CD4-positive, alpha-beta T cell (primary cell): ENCODE measurements at regions of chr1 and their contacts with region 1.

Region 1: DNA sequence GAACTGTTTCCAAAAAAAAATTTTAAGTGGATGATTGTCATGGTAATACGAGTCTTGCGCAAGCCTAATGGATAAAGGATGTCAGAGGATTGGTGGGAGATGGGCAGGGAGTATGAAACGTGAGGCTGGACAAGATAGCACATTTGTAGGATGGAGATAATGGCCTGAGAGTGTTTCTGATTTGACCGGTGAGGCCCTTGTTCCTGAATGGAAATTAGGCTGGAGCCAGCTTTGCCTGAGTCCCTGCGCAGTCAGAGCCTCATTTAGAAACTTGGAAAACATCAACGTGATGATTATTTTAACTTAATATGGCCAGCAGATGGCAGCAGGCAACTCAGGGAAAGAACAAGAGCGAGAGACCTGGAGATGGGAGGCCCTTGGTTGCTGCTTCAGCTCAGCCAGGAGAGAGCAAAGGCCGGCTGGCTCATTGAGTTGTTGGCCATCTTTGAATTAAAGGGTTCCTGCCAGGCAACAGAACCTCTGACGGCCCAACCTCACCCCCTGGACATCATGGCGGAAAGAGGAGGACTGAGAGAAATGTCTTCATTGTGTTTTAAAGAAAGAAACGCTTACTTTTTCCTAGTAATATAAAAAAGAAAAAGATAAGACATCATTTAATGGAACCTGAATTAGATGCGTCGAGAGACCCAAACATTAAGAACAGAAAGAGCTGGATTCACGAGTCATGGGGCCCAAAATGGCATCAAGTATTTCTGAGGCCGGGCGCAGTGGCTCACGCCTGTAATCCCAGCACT is 80.3 kb downstream of the SELENOF start:
- DNase-seq: peak; percentile 26 to 80 (median 42)
- ATAC-seq: peak; percentile 72
- H3K4me3 ChIP-seq: no peak overlapping the region
- H3K4me3 Mint-ChIP-seq: no peak overlapping the region
- H3K27ac ChIP-seq: no peak overlapping the region
- H3K27ac Mint-ChIP-seq: no peak overlapping the region
- H3K4me1 ChIP-seq: peaks cover 3% of the 10 kb centered on the region
- H3K4me1 Mint-ChIP-seq: no peaks in the 10 kb centered on the region
- H3K27me3 ChIP-seq: no peaks in the 10 kb centered on the region
- H3K27me3 Mint-ChIP-seq: peaks cover 4% of the 10 kb centered on the region
- CTCF ChIP-seq: peak; percentile 75

Region 2: DNA sequence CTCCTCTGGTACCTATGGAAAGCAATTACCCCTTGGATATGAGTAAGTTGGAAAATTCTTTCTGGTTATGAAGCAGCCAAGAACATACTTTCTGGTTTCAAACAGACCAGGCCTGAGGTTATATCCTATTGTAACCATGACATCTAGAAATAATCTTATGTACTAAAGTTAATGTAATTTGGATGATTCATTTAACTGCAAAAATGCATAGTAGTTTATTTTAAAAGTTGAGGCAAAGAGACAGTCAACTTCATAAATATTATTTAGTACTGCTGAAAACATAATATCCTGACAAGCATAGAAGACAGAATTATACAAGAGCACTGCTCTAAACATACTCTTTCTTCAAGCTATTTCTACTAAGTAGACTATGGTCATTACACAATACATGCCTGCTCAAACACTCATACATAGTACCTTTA is 463.0 kb before region 1 on chr1:
- CTCF ChIA-PET with region 1: no interaction called
- POLR2A ChIA-PET with region 1: no interaction called
- intact Hi-C with region 1: loop called in 1 of 2 experiments (anchors 10 kb)
- DNase-seq: no peak
- ATAC-seq: no peak
- H3K4me3 ChIP-seq: no peak overlapping the region
- H3K4me3 Mint-ChIP-seq: no peak overlapping the region
- H3K27ac ChIP-seq: no peak overlapping the region
- H3K27ac Mint-ChIP-seq: no peak overlapping the region
- H3K4me1 ChIP-seq: no peaks in the 10 kb centered on the region
- H3K4me1 Mint-ChIP-seq: no peaks in the 10 kb centered on the region
- H3K27me3 ChIP-seq: no peaks in the 10 kb centered on the region
- H3K27me3 Mint-ChIP-seq: no peaks in the 10 kb centered on the region
- CTCF ChIP-seq: no peak

Region 3: DNA sequence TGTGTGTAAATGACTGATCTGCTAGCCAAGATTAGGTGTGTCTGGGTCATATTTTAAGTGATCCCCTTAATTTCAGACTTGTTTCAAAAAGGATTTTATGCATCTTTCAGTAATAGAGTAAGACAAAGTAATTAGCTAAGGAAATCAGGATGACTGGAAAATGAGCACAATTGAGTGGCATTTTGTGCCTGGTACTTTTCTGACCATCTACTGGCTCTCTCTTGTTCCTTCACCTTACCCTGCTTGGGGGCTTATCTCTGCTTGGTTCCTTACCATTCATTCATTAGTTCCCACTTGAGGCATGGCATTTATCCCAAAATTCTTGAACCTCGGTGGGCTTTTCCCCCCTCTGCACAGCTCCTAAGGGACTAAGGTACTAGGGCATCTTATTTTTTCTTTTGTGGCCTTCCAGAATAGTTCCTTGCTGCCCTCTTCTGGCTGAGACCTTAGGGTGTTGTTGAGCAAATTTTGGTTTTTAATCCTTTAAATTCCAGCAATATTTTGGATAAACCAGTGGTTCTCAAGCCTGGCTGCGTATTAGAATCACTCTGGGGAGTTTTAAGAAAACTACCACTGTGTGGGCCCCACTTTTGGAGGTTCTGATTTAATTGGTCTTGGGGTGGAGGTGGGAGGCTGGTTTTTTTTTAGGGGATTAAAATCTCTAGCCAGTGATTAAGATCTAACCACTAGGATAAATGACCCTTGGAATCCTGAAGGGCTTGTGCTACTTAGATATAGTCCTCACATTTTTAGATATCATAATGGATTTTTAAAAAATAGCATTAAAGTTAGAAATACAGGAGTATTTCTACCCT is 131.6 kb after region 1 on chr1:
- CTCF ChIA-PET with region 1: interaction called, 7 read pairs
- POLR2A ChIA-PET with region 1: no interaction called
- intact Hi-C with region 1: loop called (anchors 1 kb)
- DNase-seq: peak in 5 of 14 experiments; percentile 1 to 50 (median 29)
- ATAC-seq: no peak
- H3K4me3 ChIP-seq: no peak overlapping the region
- H3K4me3 Mint-ChIP-seq: no peak overlapping the region
- H3K27ac ChIP-seq: no peak overlapping the region
- H3K27ac Mint-ChIP-seq: no peak overlapping the region
- H3K4me1 ChIP-seq: no peaks in the 10 kb centered on the region
- H3K4me1 Mint-ChIP-seq: no peaks in the 10 kb centered on the region
- H3K27me3 ChIP-seq: no peaks in the 10 kb centered on the region
- H3K27me3 Mint-ChIP-seq: no peaks in the 10 kb centered on the region
- CTCF ChIP-seq: peak; percentile 61

Region 4: GRCh38 chr1:87024936-87025540 is 191.4 kb after region 1 on chr1:
- CTCF ChIA-PET with region 1: no interaction called
- POLR2A ChIA-PET with region 1: no interaction called
- intact Hi-C with region 1: loop called in 1 of 2 experiments (anchors 5 kb)
- DNase-seq: peak in 2 of 14 experiments; percentile 24 to 25
- ATAC-seq: peak; percentile 29
- H3K4me3 ChIP-seq: no peak overlapping the region
- H3K4me3 Mint-ChIP-seq: no peak overlapping the region
- H3K27ac ChIP-seq: no peak overlapping the region
- H3K27ac Mint-ChIP-seq: no peak overlapping the region
- H3K4me1 ChIP-seq: no peaks in the 10 kb centered on the region
- H3K4me1 Mint-ChIP-seq: peaks cover 8% of the 10 kb centered on the region
- H3K27me3 ChIP-seq: no peaks in the 10 kb centered on the region
- H3K27me3 Mint-ChIP-seq: no peaks in the 10 kb centered on the region
- CTCF ChIP-seq: peak; percentile 23